ENCODE measurements at regions of chr4 and their contacts with region 1.

Region 1: GRCh38 chr4:40238700-40239548 is 42.1 kb downstream of the RHOH start:
- DNase-seq: peak; percentile 85 to 97 (median 87)
- H3K4me3 ChIP-seq: peak overlapping the region; percentile 48 to 53
- H3K4me3 Mint-ChIP-seq: peak overlapping the region; percentile 73 to 87 (median 80)
- H3K27ac ChIP-seq: peak overlapping the region; percentile 89
- H3K27ac Mint-ChIP-seq: peak overlapping the region; percentile 95 to 100 (median 97)
- H3K4me1 ChIP-seq: peaks cover 98% of the 10 kb centered on the region
- H3K4me1 Mint-ChIP-seq: peaks cover 73 to 96% (median 86%) of the 10 kb centered on the region in 4 donors
- H3K27me3 ChIP-seq: no peaks in the 10 kb centered on the region
- H3K27me3 Mint-ChIP-seq: no peaks in the 10 kb centered on the region

Region 2: GRCh38 chr4:40134203-40134917 is 104.6 kb before region 1 on chr4:
- CTCF ChIA-PET with region 1: no interaction called
- POLR2A ChIA-PET with region 1: no interaction called
- intact Hi-C with region 1: no loop called
- DNase-seq: no peak
- H3K4me3 ChIP-seq: no peak overlapping the region
- H3K4me3 Mint-ChIP-seq: no peak overlapping the region
- H3K27ac ChIP-seq: no peak overlapping the region
- H3K27ac Mint-ChIP-seq: no peak overlapping the region
- H3K4me1 ChIP-seq: no peaks in the 10 kb centered on the region
- H3K4me1 Mint-ChIP-seq: peaks cover 0 to 11% (median 10%) of the 10 kb centered on the region in 4 donors
- H3K27me3 ChIP-seq: no peaks in the 10 kb centered on the region
- H3K27me3 Mint-ChIP-seq: no peaks in the 10 kb centered on the region

Region 3: GRCh38 chr4:40205259-40206198 is 33.4 kb before region 1 on chr4:
- CTCF ChIA-PET with region 1: interaction called, 4 read pairs
- POLR2A ChIA-PET with region 1: interaction called, 1,182 read pairs
- intact Hi-C with region 1: loop called (anchors 2 kb)
- DNase-seq: peak in 4 of 5 donors; percentile 44 to 68 (median 49)
- H3K4me3 ChIP-seq: peak overlapping the region; percentile 39 to 67
- H3K4me3 Mint-ChIP-seq: peak overlapping the region; percentile 86 to 100 (median 96)
- H3K27ac ChIP-seq: peak overlapping the region; percentile 99
- H3K27ac Mint-ChIP-seq: peak overlapping the region; percentile 92 to 100 (median 96)
- H3K4me1 ChIP-seq: peaks cover 75% of the 10 kb centered on the region
- H3K4me1 Mint-ChIP-seq: peaks cover 48 to 87% (median 61%) of the 10 kb centered on the region in 4 donors
- H3K27me3 ChIP-seq: no peaks in the 10 kb centered on the region
- H3K27me3 Mint-ChIP-seq: no peaks in the 10 kb centered on the region

Region 4: GRCh38 chr4:40255393-40256281 is 16.7 kb after region 1 on chr4:
- CTCF ChIA-PET with region 1: interaction called, 3 read pairs
- POLR2A ChIA-PET with region 1: no interaction called
- intact Hi-C with region 1: loop called (anchors 2 kb)
- DNase-seq: no peak
- H3K4me3 ChIP-seq: no peak overlapping the region
- H3K4me3 Mint-ChIP-seq: peak overlapping the region in 5 of 8 donors; percentile 5 to 70 (median 56)
- H3K27ac ChIP-seq: no peak overlapping the region
- H3K27ac Mint-ChIP-seq: peak overlapping the region; percentile 24 to 86 (median 81)
- H3K4me1 ChIP-seq: peaks cover 65% of the 10 kb centered on the region
- H3K4me1 Mint-ChIP-seq: peaks cover 32 to 70% (median 60%) of the 10 kb centered on the region in 4 donors
- H3K27me3 ChIP-seq: no peaks in the 10 kb centered on the region
- H3K27me3 Mint-ChIP-seq: no peaks in the 10 kb centered on the region

Region 5: GRCh38 chr4:40283968-40284367 is 45.0 kb after region 1 on chr4:
- CTCF ChIA-PET with region 1: interaction called, 10 read pairs
- POLR2A ChIA-PET with region 1: interaction called, 4 read pairs
- intact Hi-C with region 1: no loop called
- DNase-seq: peak; percentile 71 to 97 (median 86)
- H3K4me3 ChIP-seq: no peak overlapping the region
- H3K4me3 Mint-ChIP-seq: peak overlapping the region in 7 of 8 donors; percentile 70 to 86 (median 79)
- H3K27ac ChIP-seq: peak overlapping the region; percentile 49
- H3K27ac Mint-ChIP-seq: peak overlapping the region; percentile 92 to 98 (median 96)
- H3K4me1 ChIP-seq: peaks cover 39% of the 10 kb centered on the region
- H3K4me1 Mint-ChIP-seq: peaks cover 34 to 73% (median 55%) of the 10 kb centered on the region in 4 donors
- H3K27me3 ChIP-seq: no peaks in the 10 kb centered on the region
- H3K27me3 Mint-ChIP-seq: peaks cover 0 to 2% of the 10 kb centered on the region in 2 donors